Calu3 (cell line): ENCODE measurements at regions of chr14 and their contacts with region 1.

Region 1: GRCh38 chr14:31084385-31084784 is 58.2 kb upstream of the STRN3 start:
- DNase-seq: no peak
- H3K4me3 Mint-ChIP-seq: no peak overlapping the region
- H3K27ac Mint-ChIP-seq: no peak overlapping the region
- H3K4me1 Mint-ChIP-seq: no peaks in the 10 kb centered on the region
- H3K27me3 Mint-ChIP-seq: no peaks in the 10 kb centered on the region
- CTCF ChIP-seq: no peak

Region 2: GRCh38 chr14:29475641-29476040 is 1608.7 kb before region 1 on chr14:
- CTCF ChIA-PET with region 1: no interaction called
- intact Hi-C with region 1: no loop called
- DNase-seq: no peak
- H3K4me3 Mint-ChIP-seq: no peak overlapping the region
- H3K27ac Mint-ChIP-seq: no peak overlapping the region
- H3K4me1 Mint-ChIP-seq: no peaks in the 10 kb centered on the region
- H3K27me3 Mint-ChIP-seq: no peaks in the 10 kb centered on the region
- CTCF ChIP-seq: no peak

Region 3: GRCh38 chr14:30982533-30982932 is 101.9 kb before region 1 on chr14:
- CTCF ChIA-PET with region 1: interaction called, 6 read pairs
- intact Hi-C with region 1: loop called (anchors 1 kb)
- DNase-seq: no peak
- H3K4me3 Mint-ChIP-seq: no peak overlapping the region
- H3K27ac Mint-ChIP-seq: no peak overlapping the region
- H3K4me1 Mint-ChIP-seq: peaks cover 17% of the 10 kb centered on the region
- H3K27me3 Mint-ChIP-seq: no peaks in the 10 kb centered on the region
- CTCF ChIP-seq: no peak

Region 4: DNA sequence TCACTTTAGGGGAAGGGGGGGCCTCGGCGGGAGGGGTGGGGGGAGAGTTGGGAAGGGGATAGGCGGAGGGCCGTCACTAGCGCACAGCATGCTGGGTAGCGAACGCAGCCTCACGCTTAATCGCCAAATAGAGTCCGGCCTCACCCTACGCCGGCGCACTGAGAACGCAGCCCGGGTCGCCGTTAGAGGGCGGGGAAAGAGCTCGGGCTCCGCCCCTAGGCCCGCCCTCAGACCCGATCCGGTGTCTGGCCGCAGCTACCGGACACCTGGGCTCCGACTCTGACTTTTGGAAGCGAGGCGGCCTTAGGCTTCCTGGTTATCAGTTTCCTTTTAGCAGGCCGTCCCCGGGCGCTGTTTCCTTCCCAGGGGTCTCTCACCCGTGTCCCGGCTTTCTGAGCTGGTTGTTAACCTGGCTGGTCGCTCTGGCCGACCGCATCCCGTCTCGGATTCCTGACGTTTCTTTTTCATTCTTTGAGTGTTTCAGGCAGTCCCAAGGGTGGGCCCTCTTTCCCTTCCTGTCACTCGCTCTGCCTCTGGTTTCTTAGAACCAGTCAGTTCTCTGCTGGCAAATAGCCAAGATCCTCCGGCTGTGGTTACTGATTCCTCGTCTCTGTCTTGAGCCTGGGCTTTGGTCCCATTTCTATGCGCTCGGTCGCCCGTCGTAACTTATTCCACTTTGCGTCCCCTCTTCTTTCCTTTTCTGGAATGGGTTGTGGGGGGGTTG is 57.8 kb before region 1 on chr14:
- CTCF ChIA-PET with region 1: no interaction called
- intact Hi-C with region 1: loop called (anchors 2 kb)
- DNase-seq: peak; percentile 97
- H3K4me3 Mint-ChIP-seq: peak overlapping the region; percentile 94
- H3K27ac Mint-ChIP-seq: peak overlapping the region; percentile 99
- H3K4me1 Mint-ChIP-seq: peaks cover 30% of the 10 kb centered on the region
- H3K27me3 Mint-ChIP-seq: no peaks in the 10 kb centered on the region
- CTCF ChIP-seq: no peak

Region 5: GRCh38 chr14:31047503-31047902 is 36.9 kb before region 1 on chr14:
- CTCF ChIA-PET with region 1: no interaction called
- intact Hi-C with region 1: no loop called
- DNase-seq: no peak
- H3K4me3 Mint-ChIP-seq: no peak overlapping the region
- H3K27ac Mint-ChIP-seq: no peak overlapping the region
- H3K4me1 Mint-ChIP-seq: peaks cover 13% of the 10 kb centered on the region
- H3K27me3 Mint-ChIP-seq: no peaks in the 10 kb centered on the region
- CTCF ChIP-seq: no peak

Region 6: GRCh38 chr14:31059152-31059924 is 25.0 kb before region 1 on chr14:
- CTCF ChIA-PET with region 1: interaction called, 4 read pairs
- intact Hi-C with region 1: loop called (anchors 2 kb)
- DNase-seq: peak; percentile 57
- H3K4me3 Mint-ChIP-seq: no peak overlapping the region
- H3K27ac Mint-ChIP-seq: peak overlapping the region; percentile 95
- H3K4me1 Mint-ChIP-seq: peaks cover 28% of the 10 kb centered on the region
- H3K27me3 Mint-ChIP-seq: no peaks in the 10 kb centered on the region
- CTCF ChIP-seq: no peak

Region 7: DNA sequence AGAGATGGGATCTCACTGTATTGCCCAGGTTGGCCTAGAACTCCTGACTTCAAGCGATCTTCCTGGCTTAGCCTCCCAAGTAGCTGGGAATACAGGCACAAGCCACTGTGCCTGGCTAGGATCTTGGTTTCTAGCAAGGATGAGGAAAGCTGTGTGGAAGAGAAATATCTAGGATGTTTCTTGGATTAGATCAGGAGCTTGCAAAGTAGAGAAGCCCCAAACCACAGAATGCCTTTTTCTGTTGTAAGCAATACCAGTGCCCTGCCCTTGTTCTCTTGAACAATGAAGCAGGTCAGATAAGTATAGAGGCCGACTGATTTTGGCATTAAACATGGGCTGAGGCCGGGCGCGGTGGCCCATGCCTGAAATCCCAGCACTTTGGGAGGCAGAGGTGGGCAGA is 14.0 kb before region 1 on chr14:
- CTCF ChIA-PET with region 1: no interaction called
- intact Hi-C with region 1: no loop called
- DNase-seq: no peak
- H3K4me3 Mint-ChIP-seq: no peak overlapping the region
- H3K27ac Mint-ChIP-seq: no peak overlapping the region
- H3K4me1 Mint-ChIP-seq: peaks cover 5% of the 10 kb centered on the region
- H3K27me3 Mint-ChIP-seq: no peaks in the 10 kb centered on the region
- CTCF ChIP-seq: no peak

Region 8: GRCh38 chr14:31154956-31155355 is 70.6 kb after region 1 on chr14:
- CTCF ChIA-PET with region 1: no interaction called
- intact Hi-C with region 1: no loop called
- DNase-seq: peak; percentile 3
- H3K4me3 Mint-ChIP-seq: no peak overlapping the region
- H3K27ac Mint-ChIP-seq: no peak overlapping the region
- H3K4me1 Mint-ChIP-seq: peaks cover 8% of the 10 kb centered on the region
- H3K27me3 Mint-ChIP-seq: no peaks in the 10 kb centered on the region
- CTCF ChIP-seq: no peak